SK-N-SH (cell line): ENCODE measurements at regions of chr2 and their contacts with region 1.

Region 1: GRCh38 chr2:174465327-174465726 is 21.5 kb downstream of the GPR155 start:
- DNase-seq: no peak
- H3K4me3 ChIP-seq: no peak overlapping the region
- H3K27ac ChIP-seq: no peak overlapping the region
- H3K4me1 ChIP-seq: peaks cover 0 to 2% of the 10 kb centered on the region in 2 experiments; a peak in 2 of 4 replicates
- H3K27me3 ChIP-seq: no peaks in the 10 kb centered on the region
- CTCF ChIP-seq: no peak
- EP300 ChIP-seq: no peak
- RAD21 ChIP-seq: no peak; the same call in 1 of the 2 replicates

Region 2: GRCh38 chr2:173990970-173991819 is 474.1 kb before region 1 on chr2:
- CTCF ChIA-PET with region 1: no interaction called
- POLR2A ChIA-PET with region 1: no interaction called
- DNase-seq: peak; percentile 43
- H3K4me3 ChIP-seq: no peak overlapping the region
- H3K27ac ChIP-seq: peak overlapping the region in 1 of 2 experiments; percentile 58; a peak in 1 of 4 replicates
- H3K4me1 ChIP-seq: peaks cover 0 to 15% of the 10 kb centered on the region in 2 experiments; a peak in 2 of 4 replicates
- H3K27me3 ChIP-seq: no peaks in the 10 kb centered on the region
- CTCF ChIP-seq: no peak
- EP300 ChIP-seq: no peak
- RAD21 ChIP-seq: 0 out of 2 replicates have a peak, but pooled peaks have one; percentile 21

Region 3: DNA sequence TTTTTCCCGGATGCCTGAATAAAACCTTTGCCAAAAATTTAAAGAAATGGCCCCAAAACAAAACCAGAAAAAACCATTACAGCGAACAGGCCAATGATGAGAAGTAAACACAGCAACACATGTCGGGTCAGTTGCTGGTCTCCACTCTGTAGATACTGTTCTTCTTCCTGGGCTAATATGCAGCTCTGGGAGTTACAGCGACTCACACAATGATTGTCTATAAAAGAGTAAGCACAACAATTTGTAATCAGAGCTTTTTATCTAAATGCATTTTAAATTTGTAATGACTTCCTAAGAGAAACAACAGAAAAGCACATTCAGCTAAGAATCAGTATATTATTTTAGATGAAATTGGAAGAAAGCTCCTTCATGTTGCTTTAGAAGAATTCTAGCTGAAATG is 18.8 kb before region 1 on chr2:
- CTCF ChIA-PET with region 1: interaction called, 10 read pairs
- POLR2A ChIA-PET with region 1: interaction called, 3 read pairs
- DNase-seq: peak; percentile 70
- H3K4me3 ChIP-seq: no peak overlapping the region
- H3K27ac ChIP-seq: peak overlapping the region; percentile 4 to 90; a peak in 2 of 4 replicates
- H3K4me1 ChIP-seq: peaks cover 9 to 25% of the 10 kb centered on the region in 2 experiments; a peak in 3 of 4 replicates
- H3K27me3 ChIP-seq: no peaks in the 10 kb centered on the region
- CTCF ChIP-seq: no peak
- EP300 ChIP-seq: peak in 1 of 2 experiments; percentile 74; a peak in 1 of 4 replicates
- RAD21 ChIP-seq: no peak; the same call in 1 of the 2 replicates

Region 4: DNA sequence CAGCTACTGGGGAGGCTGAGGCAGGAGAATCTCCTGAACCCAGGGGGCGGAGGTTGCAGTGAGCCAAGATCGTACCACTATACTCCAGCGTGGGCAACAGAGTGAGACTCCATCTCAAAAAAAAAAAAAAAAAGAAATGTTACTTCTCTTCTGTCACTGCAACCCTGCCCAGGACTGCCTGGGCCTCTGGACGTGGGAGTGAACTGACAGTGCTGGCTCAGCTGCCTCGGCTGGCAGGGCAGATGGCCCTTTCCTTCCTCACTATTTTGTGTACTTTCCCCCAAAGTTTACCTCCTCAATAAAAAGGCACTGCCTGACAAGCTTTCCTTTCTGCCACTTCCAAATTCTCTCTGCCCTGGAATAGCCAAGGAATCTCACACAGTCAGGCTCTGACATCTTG is 34.0 kb after region 1 on chr2:
- CTCF ChIA-PET with region 1: interaction called, 10 read pairs
- POLR2A ChIA-PET with region 1: no interaction called
- DNase-seq: no peak
- H3K4me3 ChIP-seq: no peak overlapping the region
- H3K27ac ChIP-seq: no peak overlapping the region
- H3K4me1 ChIP-seq: no peaks in the 10 kb centered on the region
- H3K27me3 ChIP-seq: no peaks in the 10 kb centered on the region; the same call in 1 of the 2 replicates
- CTCF ChIP-seq: no peak
- EP300 ChIP-seq: no peak
- RAD21 ChIP-seq: no peak

Region 5: GRCh38 chr2:174546581-174547506 is 81.5 kb after region 1 on chr2:
- CTCF ChIA-PET with region 1: interaction called, 107 read pairs
- POLR2A ChIA-PET with region 1: interaction called, 5 read pairs
- DNase-seq: peak; percentile 47
- H3K4me3 ChIP-seq: no peak overlapping the region; a peak in 1 of 4 replicates
- H3K27ac ChIP-seq: no peak overlapping the region
- H3K4me1 ChIP-seq: no peaks in the 10 kb centered on the region; a peak in 1 of 4 replicates
- H3K27me3 ChIP-seq: no peaks in the 10 kb centered on the region
- CTCF ChIP-seq: peak; percentile 48
- EP300 ChIP-seq: no peak
- RAD21 ChIP-seq: peak; percentile 82

Region 6: GRCh38 chr2:174577967-174578589 is 112.8 kb after region 1 on chr2:
- CTCF ChIA-PET with region 1: interaction called, 10 read pairs
- POLR2A ChIA-PET with region 1: no interaction called
- DNase-seq: peak; percentile 51
- H3K4me3 ChIP-seq: no peak overlapping the region
- H3K27ac ChIP-seq: peak overlapping the region; percentile 4 to 7; a peak in 3 of 4 replicates
- H3K4me1 ChIP-seq: no peaks in the 10 kb centered on the region; a peak in 2 of 4 replicates
- H3K27me3 ChIP-seq: no peaks in the 10 kb centered on the region
- CTCF ChIP-seq: peak; percentile 80
- EP300 ChIP-seq: no peak
- RAD21 ChIP-seq: peak; percentile 91

Region 7: GRCh38 chr2:174688079-174688478 is 222.8 kb after region 1 on chr2:
- CTCF ChIA-PET with region 1: interaction called, 59 read pairs
- POLR2A ChIA-PET with region 1: interaction called, 4 read pairs
- DNase-seq: no peak
- H3K4me3 ChIP-seq: no peak overlapping the region
- H3K27ac ChIP-seq: no peak overlapping the region; a peak in 1 of 4 replicates
- H3K4me1 ChIP-seq: peaks cover 0 to 15% of the 10 kb centered on the region in 2 experiments; a peak in 2 of 4 replicates
- H3K27me3 ChIP-seq: no peaks in the 10 kb centered on the region
- CTCF ChIP-seq: peak; percentile 77
- EP300 ChIP-seq: no peak
- RAD21 ChIP-seq: peak; percentile 66